WTC11 (cell line): ENCODE measurements at regions of chr19 and their contacts with region 1.

Region 1: DNA sequence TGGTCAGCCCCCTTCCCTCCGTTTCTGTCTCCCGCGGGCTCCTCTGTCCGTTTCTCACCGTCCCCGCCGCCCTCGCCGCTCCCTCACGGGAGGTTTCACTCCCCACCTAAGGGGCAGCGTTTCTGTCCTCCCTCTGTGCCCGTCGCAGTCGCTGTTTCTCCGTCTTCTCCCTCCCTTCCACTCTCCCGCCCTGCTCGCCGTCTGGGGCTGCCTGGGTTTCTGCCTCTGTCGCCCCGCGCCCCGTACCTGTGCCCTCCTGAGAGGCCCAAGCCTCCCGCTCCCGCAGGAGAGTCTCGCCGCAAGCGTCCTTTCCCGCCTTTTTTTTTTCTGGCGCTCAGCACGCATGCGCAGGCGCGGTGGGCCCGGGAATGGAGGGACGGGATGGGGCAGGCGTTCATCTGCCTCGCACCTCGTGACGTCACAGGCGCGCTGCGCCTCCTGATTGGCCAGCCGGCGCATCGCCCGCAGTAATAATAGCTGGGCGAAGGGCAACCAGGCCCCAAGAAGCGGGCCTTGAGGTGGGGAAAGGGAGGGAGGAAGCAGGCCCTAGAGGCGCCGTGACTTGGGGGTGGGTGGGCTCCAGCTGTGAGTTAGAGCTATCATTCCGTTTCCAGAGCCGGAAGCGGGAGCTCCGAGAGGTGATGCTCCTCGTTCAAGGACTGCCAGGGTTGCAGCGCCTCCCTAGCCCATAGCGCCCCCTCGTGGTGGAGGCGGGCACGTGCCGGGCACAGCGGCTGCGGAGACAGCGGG is 15.4 kb downstream of the SSC5D start:
- DNase-seq: peak; percentile 96
- ATAC-seq: peak; percentile 94
- H3K4me3 Mint-ChIP-seq: no peak overlapping the region
- H3K27ac Mint-ChIP-seq: no peak overlapping the region
- H3K4me1 Mint-ChIP-seq: no peaks in the 10 kb centered on the region
- H3K27me3 Mint-ChIP-seq: peaks cover 86% of the 10 kb centered on the region
- CTCF ChIP-seq: peak; percentile 99

Region 2: DNA sequence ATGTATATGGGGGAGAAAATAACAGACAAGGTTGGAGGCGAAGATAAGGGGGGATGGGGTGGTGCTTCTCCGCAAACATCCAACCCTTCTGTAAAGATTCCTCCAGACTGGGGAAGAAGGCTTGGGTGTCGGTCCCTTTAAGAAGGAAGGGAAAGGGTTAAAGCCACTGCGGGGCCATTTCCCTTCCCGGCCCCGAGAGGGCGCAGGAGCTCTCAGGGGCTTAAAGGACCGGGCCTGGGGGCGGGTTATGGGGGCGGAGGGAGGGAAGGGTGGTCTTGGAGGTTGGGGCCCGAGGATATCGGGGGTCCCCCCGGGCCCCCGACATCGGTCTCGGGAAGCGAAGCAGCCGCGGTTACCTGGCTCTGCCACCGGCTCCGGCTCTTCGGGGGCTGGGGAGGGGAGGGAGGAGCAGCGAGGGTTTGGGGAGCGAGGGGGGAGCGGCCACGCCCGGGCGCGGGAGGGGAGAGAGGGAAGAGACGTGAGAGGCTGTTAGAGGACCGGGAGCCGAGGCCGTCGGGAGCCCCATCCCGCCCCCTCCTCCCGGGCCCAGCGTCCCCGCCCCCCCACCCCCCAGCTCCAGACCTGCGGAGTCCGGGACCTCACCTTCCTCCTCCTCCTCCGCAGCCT is 357.5 kb before region 1 on chr19:
- CTCF ChIA-PET with region 1: interaction called, 18 read pairs
- POLR2A ChIA-PET with region 1: no interaction called
- DNase-seq: peak; percentile 79
- ATAC-seq: peak; percentile 33
- H3K4me3 Mint-ChIP-seq: peak overlapping the region; percentile 65
- H3K27ac Mint-ChIP-seq: no peak overlapping the region
- H3K4me1 Mint-ChIP-seq: peaks cover 39% of the 10 kb centered on the region
- H3K27me3 Mint-ChIP-seq: peaks cover 26% of the 10 kb centered on the region
- CTCF ChIP-seq: peak; percentile 75

Region 3: DNA sequence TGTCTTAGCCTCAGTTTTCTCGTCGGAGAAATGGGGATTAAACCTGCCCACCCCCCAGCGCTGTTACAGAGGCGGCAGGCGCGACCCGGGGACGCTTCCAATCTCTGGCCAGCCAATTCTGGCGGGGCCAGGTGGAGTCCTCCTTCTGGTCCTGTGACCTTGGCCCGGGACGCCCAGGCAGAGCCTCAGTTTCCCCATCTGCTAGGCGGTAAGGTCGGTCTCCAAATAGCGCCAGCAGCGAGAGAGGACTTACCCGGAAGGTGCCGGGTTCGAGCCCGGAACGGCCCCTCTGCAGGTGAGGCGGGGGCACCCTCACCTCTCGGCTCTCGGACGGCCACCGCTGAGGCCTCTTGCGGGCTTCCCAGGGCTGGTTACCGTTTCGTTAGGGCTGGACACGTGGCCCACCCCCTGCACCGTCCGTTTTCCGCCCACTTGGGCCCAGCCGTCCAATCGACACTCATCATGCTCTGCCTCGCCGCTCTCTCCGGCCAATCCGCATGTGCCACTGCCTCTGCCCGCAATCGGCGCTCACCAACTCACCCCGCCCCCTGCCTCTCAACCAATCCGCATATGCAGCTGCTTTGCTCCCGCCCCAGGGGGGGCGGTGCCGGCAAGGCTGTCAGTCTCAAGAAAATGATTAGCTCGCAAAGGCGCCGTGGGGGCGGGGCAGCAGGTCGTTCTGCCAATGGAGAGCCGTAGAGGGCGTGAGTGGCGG is 42.3 kb before region 1 on chr19 and contains the start of gene ISOC2:
- CTCF ChIA-PET with region 1: interaction called, 63 read pairs
- POLR2A ChIA-PET with region 1: interaction called, 5 read pairs
- DNase-seq: peak; percentile 100
- ATAC-seq: peak; percentile 89
- H3K4me3 Mint-ChIP-seq: peak within 1 kb of the TSS; percentile 84
- H3K27ac Mint-ChIP-seq: peak within 1 kb of the TSS; percentile 93
- H3K4me1 Mint-ChIP-seq: peaks cover 43% of the 10 kb centered on the region
- H3K27me3 Mint-ChIP-seq: peaks cover 20% of the 10 kb centered on the region
- CTCF ChIP-seq: no peak
- total RNA-seq, gene ISOC2: 96.3 to 96.6 TPM (median 96.4 TPM) in 3 replicates

Region 4: GRCh38 chr19:55476100-55476775 is 27.4 kb before region 1 on chr19 and contains the start of gene ZNF628:
- CTCF ChIA-PET with region 1: interaction called, 36 read pairs
- POLR2A ChIA-PET with region 1: no interaction called
- DNase-seq: peak; percentile 99
- ATAC-seq: peak; percentile 88
- H3K4me3 Mint-ChIP-seq: peak within 1 kb of the TSS; percentile 85
- H3K27ac Mint-ChIP-seq: peak within 1 kb of the TSS; percentile 81
- H3K4me1 Mint-ChIP-seq: peaks cover 27% of the 10 kb centered on the region
- H3K27me3 Mint-ChIP-seq: peaks cover 9% of the 10 kb centered on the region
- CTCF ChIP-seq: no peak
- total RNA-seq, gene ZNF628: 14.0 to 23.6 TPM (median 17.8 TPM) in 3 replicates

Region 5: GRCh38 chr19:55516878-55517620 is 13.4 kb after region 1 on chr19:
- CTCF ChIA-PET with region 1: interaction called, 12 read pairs
- POLR2A ChIA-PET with region 1: no interaction called
- DNase-seq: peak; percentile 96
- ATAC-seq: peak; percentile 99
- H3K4me3 Mint-ChIP-seq: peak overlapping the region; percentile 58
- H3K27ac Mint-ChIP-seq: no peak overlapping the region
- H3K4me1 Mint-ChIP-seq: no peaks in the 10 kb centered on the region
- H3K27me3 Mint-ChIP-seq: peaks cover 24% of the 10 kb centered on the region
- CTCF ChIP-seq: peak; percentile 32; the same call in 1 of the 2 replicates

Region 6: GRCh38 chr19:55549500-55550320 is 46.0 kb after region 1 on chr19:
- CTCF ChIA-PET with region 1: interaction called, 10 read pairs
- POLR2A ChIA-PET with region 1: no interaction called
- DNase-seq: peak; percentile 70
- ATAC-seq: peak; percentile 81
- H3K4me3 Mint-ChIP-seq: peak overlapping the region; percentile 76
- H3K27ac Mint-ChIP-seq: peak overlapping the region; percentile 90
- H3K4me1 Mint-ChIP-seq: peaks cover 52% of the 10 kb centered on the region
- H3K27me3 Mint-ChIP-seq: peaks cover 9% of the 10 kb centered on the region
- CTCF ChIP-seq: no peak

Region 7: GRCh38 chr19:55624109-55625003 is 120.7 kb after region 1 on chr19 and contains the start of gene ZNF784:
- CTCF ChIA-PET with region 1: interaction called, 15 read pairs
- POLR2A ChIA-PET with region 1: no interaction called
- DNase-seq: peak; percentile 92
- ATAC-seq: peak; percentile 87
- H3K4me3 Mint-ChIP-seq: peak within 1 kb of the TSS; percentile 76
- H3K27ac Mint-ChIP-seq: peak within 1 kb of the TSS; percentile 90
- H3K4me1 Mint-ChIP-seq: peaks cover 15% of the 10 kb centered on the region
- H3K27me3 Mint-ChIP-seq: peaks cover 18% of the 10 kb centered on the region
- CTCF ChIP-seq: no peak
- total RNA-seq, gene ZNF784: 9.9 to 12.1 TPM (median 11.4 TPM) in 3 replicates